Right ventricle myocardium inferior (tissue), 1 donor: ENCODE measurements at regions of chr2 and their contacts with region 1.

Region 1: DNA sequence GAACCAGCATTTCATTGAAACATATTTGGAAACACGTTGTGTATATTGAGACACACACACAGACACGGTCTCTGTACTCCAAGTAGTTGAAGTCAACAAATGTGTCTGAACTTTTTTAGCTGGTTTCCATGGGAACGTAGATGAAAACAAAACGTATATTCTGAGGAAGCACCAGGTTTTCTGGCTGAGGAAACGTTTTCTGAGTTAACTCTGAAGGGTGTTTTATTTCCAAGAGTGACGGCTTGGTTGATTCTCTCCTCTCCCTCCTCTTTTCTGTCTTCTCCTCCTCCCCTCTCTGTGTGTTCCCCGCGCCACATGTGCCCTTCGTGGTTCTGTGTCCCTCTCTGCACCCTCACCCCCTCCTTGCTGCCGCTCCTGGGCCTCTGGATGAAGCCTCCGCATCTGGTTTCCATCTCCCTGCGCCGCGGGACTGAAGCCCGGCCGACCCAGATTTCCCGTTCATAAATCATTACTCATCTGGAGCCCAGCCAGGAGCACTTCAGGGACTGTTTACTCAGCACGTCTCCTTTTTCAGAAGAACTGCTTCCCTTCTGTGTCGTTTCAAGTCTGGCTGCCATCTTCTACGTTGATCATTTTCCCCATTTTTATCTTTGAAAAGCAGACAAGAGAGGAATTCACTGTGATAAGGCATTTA is 122.7 kb downstream of the COL6A3 start:
- DNase-seq: peak; percentile 97
- ATAC-seq: peak; percentile 95

Region 2: DNA sequence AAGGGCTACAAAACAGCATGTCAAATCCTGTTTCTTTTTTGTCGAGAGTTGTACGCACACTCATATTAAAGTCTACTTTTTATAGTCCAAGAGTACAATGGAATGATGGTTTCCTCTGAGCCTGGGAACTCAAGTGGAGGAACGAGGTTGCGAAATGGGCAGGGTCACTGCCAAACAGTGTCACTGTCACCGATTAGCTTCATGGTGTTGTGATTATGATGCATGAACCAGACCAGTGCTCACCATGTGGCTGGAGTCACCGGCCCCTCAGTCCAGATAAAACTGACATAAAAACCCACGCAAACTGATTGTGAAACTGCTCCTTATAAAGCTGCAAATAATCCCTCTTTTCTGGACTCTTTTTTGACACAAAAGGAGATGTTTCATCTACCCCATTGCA is 83.6 kb before region 1 on chr2:
- intact Hi-C with region 1: loop called (anchors 5 kb)
- DNase-seq: peak; percentile 91
- ATAC-seq: peak; percentile 90

Region 3: GRCh38 chr2:237235383-237236095 is 55.7 kb before region 1 on chr2:
- intact Hi-C with region 1: loop called (anchors 1 kb)
- DNase-seq: peak; percentile 77
- ATAC-seq: peak; percentile 94

Region 4: GRCh38 chr2:237383991-237384671 is 92.9 kb after region 1 on chr2:
- intact Hi-C with region 1: no loop called
- DNase-seq: no peak
- ATAC-seq: peak; percentile 23